ENCODE measurements at regions of chr5 and their contacts with region 1.

Region 1: DNA sequence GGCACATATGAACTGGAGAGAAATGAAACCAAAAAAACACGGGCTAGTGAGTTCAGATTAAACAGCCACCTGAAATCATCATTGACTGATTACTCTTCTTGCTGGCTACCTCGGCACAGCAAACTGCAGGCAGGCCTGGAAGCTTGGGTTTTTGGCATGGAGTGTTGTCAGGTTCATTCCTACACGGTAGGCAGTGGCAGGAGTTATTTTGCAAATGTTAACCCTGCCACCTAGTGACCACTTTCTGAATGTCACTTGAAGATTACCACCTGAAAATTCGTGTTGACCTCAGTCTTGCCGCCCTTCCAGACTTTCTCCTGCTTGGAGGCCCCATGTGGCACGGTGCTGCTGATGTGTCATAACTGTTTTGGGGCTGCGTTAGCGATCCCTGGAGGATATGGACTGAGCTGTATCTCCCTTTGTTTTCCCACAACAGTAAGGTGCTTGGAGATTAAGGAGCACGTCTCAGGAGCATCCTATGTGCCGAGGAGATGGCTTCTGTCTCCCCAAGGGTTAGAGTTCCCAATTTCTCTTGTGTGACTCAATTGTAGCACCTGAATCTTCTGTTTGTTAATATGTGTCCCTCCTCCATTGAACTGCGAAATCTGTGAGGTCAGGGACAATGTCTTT is 12.7 kb upstream of the CD180 start:
- DNase-seq: peak; percentile 62
- H3K4me3 Mint-ChIP-seq: peak overlapping the region; percentile 25
- H3K27ac Mint-ChIP-seq: no peak overlapping the region
- H3K4me1 Mint-ChIP-seq: peaks cover 59% of the 10 kb centered on the region
- H3K27me3 Mint-ChIP-seq: no peaks in the 10 kb centered on the region

Region 2: GRCh38 chr5:66814146-66814991 is 394.9 kb before region 1 on chr5:
- intact Hi-C with region 1: loop called (anchors 1 kb)
- DNase-seq: peak; percentile 47
- H3K4me3 Mint-ChIP-seq: peak overlapping the region; percentile 24
- H3K27ac Mint-ChIP-seq: no peak overlapping the region
- H3K4me1 Mint-ChIP-seq: peaks cover 78% of the 10 kb centered on the region
- H3K27me3 Mint-ChIP-seq: no peaks in the 10 kb centered on the region

Region 3: GRCh38 chr5:66987949-66988838 is 221.1 kb before region 1 on chr5:
- intact Hi-C with region 1: loop called (anchors 1 kb)
- DNase-seq: no peak
- H3K4me3 Mint-ChIP-seq: no peak overlapping the region
- H3K27ac Mint-ChIP-seq: no peak overlapping the region
- H3K4me1 Mint-ChIP-seq: peaks cover 31% of the 10 kb centered on the region
- H3K27me3 Mint-ChIP-seq: no peaks in the 10 kb centered on the region

Region 4: GRCh38 chr5:67156976-67157583 is 52.2 kb before region 1 on chr5:
- intact Hi-C with region 1: loop called (anchors 1 kb)
- DNase-seq: no peak
- H3K4me3 Mint-ChIP-seq: no peak overlapping the region
- H3K27ac Mint-ChIP-seq: peak overlapping the region; percentile 25
- H3K4me1 Mint-ChIP-seq: peaks cover 51% of the 10 kb centered on the region
- H3K27me3 Mint-ChIP-seq: no peaks in the 10 kb centered on the region

Region 5: DNA sequence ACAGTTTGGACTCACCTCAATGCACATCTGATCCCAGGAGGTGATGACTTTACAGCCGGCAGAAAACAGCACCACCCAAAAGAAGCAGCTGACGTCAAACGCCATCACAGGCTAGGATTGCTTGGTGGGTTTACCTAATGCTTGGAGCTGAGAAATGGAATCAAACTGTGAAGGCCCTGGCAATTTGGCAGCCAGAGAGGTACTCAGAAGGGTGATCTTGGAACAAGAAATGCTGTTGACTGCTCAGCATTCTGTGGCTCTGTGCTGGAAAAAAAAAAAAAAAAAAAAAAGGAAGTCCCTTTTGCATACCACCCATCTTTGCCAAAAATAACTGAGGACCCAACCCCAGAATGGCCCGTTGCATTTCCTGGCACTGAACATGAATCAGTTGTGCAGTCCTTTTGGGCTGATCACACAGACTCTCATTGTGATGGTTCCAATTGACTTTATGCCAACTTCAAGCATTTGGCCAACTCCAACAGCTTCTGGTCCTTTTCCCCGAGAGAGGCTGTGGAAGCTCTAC is 12.7 kb before region 1 on chr5 and contains the start of gene CD180:
- intact Hi-C with region 1: loop called (anchors 1 kb)
- DNase-seq: no peak
- H3K4me3 Mint-ChIP-seq: peak within 1 kb of the TSS; percentile 5
- H3K27ac Mint-ChIP-seq: no peak within 1 kb of the TSS
- H3K4me1 Mint-ChIP-seq: peaks cover 78% of the 10 kb centered on the region
- H3K27me3 Mint-ChIP-seq: no peaks in the 10 kb centered on the region
- total RNA-seq, gene CD180: 0.54 and 1.4 TPM in 2 replicates

Measured in activated T-helper 1 cell treated with anti-CD3 and anti-CD28 coated beads, Interleukin-12 subunit alpha, Interleukin-12 subunit beta, Interleukin-2, Interleukin-4 antibody, amounts not matched to agents 30 ng/mL and 10 ng/mL and 1 ng/mL, durations not matched to agents 14 hours and 24 hours and 36 hours (primary cell).